T-cell (primary cell): ENCODE measurements at regions of chr14 and their contacts with region 1.

Region 1: GRCh38 chr14:49820176-49820575 is 32.4 kb downstream of the NEMF start:
- DNase-seq: no peak
- ATAC-seq: no peak
- H3K4me3 ChIP-seq: no peak overlapping the region
- H3K4me3 Mint-ChIP-seq: no peak overlapping the region
- H3K27ac ChIP-seq: no peak overlapping the region
- H3K27ac Mint-ChIP-seq: no peak overlapping the region
- H3K4me1 ChIP-seq: no peaks in the 10 kb centered on the region
- H3K4me1 Mint-ChIP-seq: peaks cover 0 to 3% (median 0%) of the 10 kb centered on the region in 3 donors
- H3K27me3 ChIP-seq: no peaks in the 10 kb centered on the region
- H3K27me3 Mint-ChIP-seq: no peaks in the 10 kb centered on the region

Region 2: GRCh38 chr14:49796025-49796424 is 24.2 kb before region 1 on chr14:
- CTCF ChIA-PET with region 1: no interaction called
- POLR2A ChIA-PET with region 1: interaction called in 1 of 2 experiments, 12 read pairs
- DNase-seq: no peak
- ATAC-seq: no peak
- H3K4me3 ChIP-seq: no peak overlapping the region
- H3K4me3 Mint-ChIP-seq: no peak overlapping the region
- H3K27ac ChIP-seq: no peak overlapping the region
- H3K27ac Mint-ChIP-seq: peak overlapping the region; percentile 8 to 47
- H3K4me1 ChIP-seq: no peaks in the 10 kb centered on the region
- H3K4me1 Mint-ChIP-seq: no peaks in the 10 kb centered on the region
- H3K27me3 ChIP-seq: no peaks in the 10 kb centered on the region
- H3K27me3 Mint-ChIP-seq: no peaks in the 10 kb centered on the region